Body of pancreas (tissue), 4 donors: ENCODE measurements at regions of chr11 and their contacts with region 1.

Region 1: DNA sequence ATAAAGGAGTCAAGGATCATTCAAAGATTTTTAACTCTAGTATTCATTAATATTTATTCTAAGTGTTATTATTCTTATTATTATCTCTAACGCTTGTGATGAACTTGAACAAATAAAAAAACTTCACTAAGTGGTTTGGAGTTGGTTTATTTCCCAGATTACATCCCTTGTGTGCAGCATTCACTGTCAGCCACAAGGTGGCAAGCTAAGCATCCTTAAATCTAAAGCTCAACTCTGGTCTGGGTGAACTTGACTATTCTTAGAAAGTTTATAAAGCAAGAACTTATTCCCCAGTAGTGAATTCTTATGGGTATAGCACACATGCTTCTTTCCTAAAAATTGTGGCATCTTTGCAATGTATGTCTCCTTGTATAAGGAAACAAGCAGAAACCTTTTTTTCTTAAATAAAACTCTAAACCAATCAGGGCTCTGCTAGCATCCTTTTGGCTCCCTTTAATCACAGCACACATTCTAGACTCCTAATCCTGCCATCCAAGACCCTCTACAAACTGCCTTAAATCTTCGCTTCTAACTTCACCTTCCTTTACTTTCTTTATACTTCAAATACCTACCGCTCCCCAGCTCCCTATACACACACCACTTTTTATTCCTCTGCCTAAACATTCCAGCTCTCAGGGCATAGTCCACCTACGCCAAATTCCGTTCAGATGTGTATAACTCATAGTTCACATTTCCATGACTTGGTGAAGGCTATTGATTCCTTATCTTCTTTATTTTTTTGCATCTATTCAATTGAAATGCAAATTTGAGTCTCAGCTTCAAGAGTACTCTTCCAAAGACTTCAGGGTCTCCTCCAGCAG is 1068.8 kb downstream of the DLG2 start:
- DNase-seq: peak; percentile 49 to 72 (median 60)
- ATAC-seq: peak; percentile 85
- H3K4me3 ChIP-seq: no peak overlapping the region
- H3K27ac ChIP-seq: no peak overlapping the region
- H3K4me1 ChIP-seq: no peaks in the 10 kb centered on the region
- H3K27me3 ChIP-seq: no peaks in the 10 kb centered on the region
- CTCF ChIP-seq: peak; percentile 76 to 95 (median 82)
- POLR2A ChIP-seq: no peak

Region 2: GRCh38 chr11:84714316-84714780 is 156.1 kb after region 1 on chr11:
- intact Hi-C with region 1: loop called (anchors 10 kb)
- DNase-seq: peak; percentile 58 to 83 (median 76)
- ATAC-seq: peak; percentile 87
- H3K4me3 ChIP-seq: no peak overlapping the region
- H3K27ac ChIP-seq: no peak overlapping the region
- H3K4me1 ChIP-seq: no peaks in the 10 kb centered on the region
- H3K27me3 ChIP-seq: no peaks in the 10 kb centered on the region
- CTCF ChIP-seq: peak; percentile 20 to 89 (median 62)
- POLR2A ChIP-seq: no peak